Upper lobe of right lung (tissue), 1 donor: ENCODE measurements at regions of chr9 and their contacts with region 1.

Region 1: DNA sequence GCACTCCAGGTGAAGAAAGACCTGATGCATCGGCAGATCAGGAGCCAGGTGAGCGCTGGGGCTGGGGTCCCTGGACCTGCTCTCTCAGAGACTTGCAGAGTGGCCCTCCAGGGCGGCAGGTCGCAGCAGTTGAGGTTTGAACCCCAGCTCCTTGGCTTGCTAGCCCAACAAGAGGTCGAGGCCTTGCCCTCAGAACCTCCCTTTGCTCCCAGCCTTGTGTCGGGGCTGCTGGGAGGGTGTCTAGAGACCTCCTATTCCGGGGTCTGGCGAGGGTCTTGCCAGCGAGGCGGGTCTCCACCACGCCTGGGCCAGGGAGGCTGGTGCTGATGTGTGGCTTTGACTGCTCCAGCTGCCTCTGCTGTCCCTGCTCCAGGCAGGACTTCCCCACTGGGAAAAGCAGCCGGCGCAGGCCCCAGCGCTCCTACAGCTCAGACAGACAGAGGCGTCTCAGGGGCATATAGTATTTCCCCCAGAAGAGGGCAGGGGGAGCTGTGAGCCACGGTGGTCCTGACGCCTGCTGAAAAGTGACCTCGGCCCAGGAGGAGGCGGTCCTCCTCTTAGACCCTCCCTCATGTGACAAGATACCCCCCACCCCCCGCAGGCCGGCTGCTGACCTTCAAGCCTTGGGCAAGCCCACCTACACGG is 38.3 kb downstream of the LRSAM1 start:
- DNase-seq: no peak
- ATAC-seq: no peak
- H3K4me3 ChIP-seq: no peak overlapping the region
- H3K27ac ChIP-seq: no peak overlapping the region
- H3K4me1 ChIP-seq: no peaks in the 10 kb centered on the region
- H3K27me3 ChIP-seq: no peaks in the 10 kb centered on the region
- CTCF ChIP-seq: no peak

Region 2: DNA sequence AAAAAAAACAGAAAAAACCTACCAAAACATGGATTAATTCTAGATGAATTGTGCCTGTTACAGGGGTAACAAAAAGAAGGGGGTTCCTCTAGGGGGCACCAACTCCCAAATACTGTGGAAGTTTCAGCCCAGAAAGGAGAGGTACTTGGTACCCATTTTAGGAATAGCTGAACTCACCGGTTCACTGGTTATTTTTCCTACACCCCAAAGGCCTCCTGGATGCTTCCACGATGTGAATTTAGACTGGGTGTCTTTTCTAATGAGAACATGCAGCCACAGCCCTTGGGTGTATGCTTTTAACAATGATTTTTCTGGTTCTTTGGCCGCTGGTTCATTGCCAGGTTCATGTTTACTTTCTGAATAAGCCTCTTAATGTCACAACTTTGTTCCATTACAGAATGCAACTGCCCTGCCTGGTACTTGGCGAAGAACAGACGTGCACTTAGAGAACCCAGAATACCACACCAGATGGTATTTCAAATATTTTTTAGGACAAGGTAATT is 178.3 kb before region 1 on chr9:
- intact Hi-C with region 1: no loop called
- DNase-seq: no peak
- ATAC-seq: peak; percentile 82
- H3K4me3 ChIP-seq: no peak overlapping the region
- H3K27ac ChIP-seq: peak overlapping the region; percentile 72
- H3K4me1 ChIP-seq: peaks cover 15% of the 10 kb centered on the region
- H3K27me3 ChIP-seq: no peaks in the 10 kb centered on the region
- CTCF ChIP-seq: peak; percentile 55

Region 3: GRCh38 chr9:127723450-127723849 is 233.9 kb after region 1 on chr9:
- intact Hi-C with region 1: loop called (anchors 10 kb)
- DNase-seq: no peak
- ATAC-seq: peak; percentile 73
- H3K4me3 ChIP-seq: no peak overlapping the region
- H3K27ac ChIP-seq: no peak overlapping the region
- H3K4me1 ChIP-seq: peaks cover 10% of the 10 kb centered on the region
- H3K27me3 ChIP-seq: no peaks in the 10 kb centered on the region
- CTCF ChIP-seq: no peak